GM12878 (cell line): ENCODE measurements at regions of chr15 and their contacts with region 1.

Region 1: GRCh38 chr15:90886041-90886614 is 1.8 kb downstream of the FES start:
- DNase-seq: no peak
- ATAC-seq: peak; percentile 83
- H3K4me3 ChIP-seq: no peak overlapping the region; the same call in 1 of the 2 replicates
- H3K27ac ChIP-seq: peak overlapping the region; percentile 2; the same call in 1 of the 2 replicates
- H3K4me1 ChIP-seq: peaks cover 19% of the 10 kb centered on the region
- H3K27me3 ChIP-seq: no peaks in the 10 kb centered on the region
- CTCF ChIP-seq: peak; percentile 96 to 98 (median 97)
- EP300 ChIP-seq: no peak
- POLR2A ChIP-seq: no peak
- RAD21 ChIP-seq: peak; percentile 99

Region 2: DNA sequence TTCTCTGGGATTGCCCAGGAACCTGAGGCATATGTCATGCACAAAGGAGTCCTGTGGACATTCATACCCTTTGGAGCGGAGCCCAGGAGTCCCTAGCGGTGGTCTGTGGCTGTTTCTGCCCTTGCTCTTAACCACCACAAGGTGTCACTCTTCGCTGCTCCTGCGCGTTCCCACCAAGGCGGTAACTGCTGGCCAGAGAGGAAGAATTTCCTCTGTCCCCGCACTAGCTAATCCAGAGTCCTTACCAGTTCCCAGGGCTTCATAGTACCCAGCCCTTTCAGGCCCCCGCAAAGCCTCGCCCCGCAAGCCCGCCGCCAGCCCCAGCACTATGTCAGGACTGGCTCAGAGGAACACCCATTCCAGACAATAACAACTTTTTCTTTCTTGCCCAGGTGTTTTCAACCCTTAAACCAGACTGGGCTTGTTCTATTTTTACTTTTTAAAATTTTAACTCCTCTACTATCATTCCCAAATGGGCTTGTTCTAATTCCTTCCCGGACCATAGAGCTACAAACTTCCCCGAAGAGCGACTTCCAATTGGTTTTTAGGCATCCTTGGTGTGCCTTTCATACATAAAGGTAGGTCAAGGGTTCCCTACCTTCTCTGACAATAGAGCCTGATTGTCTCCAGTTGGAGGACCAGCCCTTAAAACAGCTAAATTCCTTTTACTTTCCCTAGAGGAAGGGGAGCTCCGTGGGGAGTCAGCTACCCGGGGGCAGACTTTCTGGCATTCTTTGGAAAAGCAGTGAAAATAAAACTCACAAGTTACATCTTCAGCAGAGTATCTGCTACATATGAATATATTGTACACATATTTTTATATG is 565.9 kb before region 1 on chr15:
- CTCF ChIA-PET with region 1: interaction called, 25 read pairs
- POLR2A ChIA-PET with region 1: no interaction called
- RAD21 ChIA-PET with region 1: interaction called, 18 read pairs
- SMC1A ChIA-PET with region 1: interaction called, 30 read pairs
- in situ Hi-C with region 1: loop called (anchors 5 kb)
- intact Hi-C with region 1: loop called (anchors 1 kb)
- DNase-seq: peak; percentile 45
- ATAC-seq: peak; percentile 100
- H3K4me3 ChIP-seq: no peak overlapping the region
- H3K27ac ChIP-seq: no peak overlapping the region
- H3K4me1 ChIP-seq: no peaks in the 10 kb centered on the region
- H3K27me3 ChIP-seq: no peaks in the 10 kb centered on the region
- CTCF ChIP-seq: peak; percentile 98 to 99 (median 98); a peak in 5 of 6 replicates
- EP300 ChIP-seq: no peak
- POLR2A ChIP-seq: no peak
- RAD21 ChIP-seq: peak; percentile 93

Region 3: DNA sequence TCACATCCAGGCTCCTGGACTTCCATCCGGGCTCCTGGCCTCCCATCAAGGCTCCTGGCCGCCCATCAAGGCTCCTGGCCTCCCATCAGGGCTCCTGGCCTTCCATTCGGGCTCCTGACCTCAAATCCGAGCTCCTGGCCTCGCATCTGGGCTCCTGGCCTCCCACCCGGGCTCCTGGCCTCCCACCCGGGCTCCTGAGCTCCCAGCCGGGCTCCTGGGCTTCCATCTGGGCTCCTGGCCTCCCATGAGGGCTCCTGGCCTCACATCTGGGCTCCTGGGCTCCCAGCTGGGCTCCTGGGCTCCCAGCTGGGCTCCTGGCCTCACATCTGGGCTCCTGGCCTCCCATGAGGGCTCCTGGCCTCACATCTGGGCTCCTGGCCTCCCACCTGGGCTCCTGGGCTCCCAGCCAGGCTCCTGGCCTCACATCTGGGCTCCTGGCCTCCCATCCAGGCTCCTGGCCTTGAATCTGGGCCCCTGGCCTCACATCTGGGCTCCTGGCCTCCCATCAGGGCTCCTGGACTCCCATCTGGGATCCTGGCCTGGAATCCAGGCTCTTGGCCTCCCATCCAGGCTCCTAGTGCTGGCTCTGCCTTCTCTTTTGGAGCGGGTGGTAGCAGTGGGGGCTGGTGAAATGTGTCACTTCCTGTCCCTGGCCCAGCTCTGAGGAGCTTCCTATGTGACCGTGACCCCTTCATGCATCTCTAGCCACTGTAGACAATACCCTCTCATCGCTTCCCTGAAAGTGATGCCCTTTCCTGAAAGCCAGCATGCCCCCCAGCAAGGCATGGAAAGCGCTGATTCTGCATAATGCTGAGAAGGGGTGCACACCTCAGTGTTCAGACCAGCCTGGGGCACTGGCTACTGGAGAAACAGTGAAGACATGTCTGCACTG is 231.6 kb before region 1 on chr15:
- CTCF ChIA-PET with region 1: interaction called, 69 read pairs
- POLR2A ChIA-PET with region 1: interaction called, 3 read pairs
- RAD21 ChIA-PET with region 1: interaction called, 12 read pairs
- SMC1A ChIA-PET with region 1: interaction called, 49 read pairs
- in situ Hi-C with region 1: loop called (anchors 5 kb)
- intact Hi-C with region 1: loop called (anchors 5 kb)
- DNase-seq: no peak
- ATAC-seq: no peak
- H3K4me3 ChIP-seq: no peak overlapping the region
- H3K27ac ChIP-seq: peak overlapping the region; percentile 7
- H3K4me1 ChIP-seq: peaks cover 45% of the 10 kb centered on the region
- H3K27me3 ChIP-seq: no peaks in the 10 kb centered on the region
- CTCF ChIP-seq: no peak
- EP300 ChIP-seq: no peak
- POLR2A ChIP-seq: no peak
- RAD21 ChIP-seq: no peak

Region 4: DNA sequence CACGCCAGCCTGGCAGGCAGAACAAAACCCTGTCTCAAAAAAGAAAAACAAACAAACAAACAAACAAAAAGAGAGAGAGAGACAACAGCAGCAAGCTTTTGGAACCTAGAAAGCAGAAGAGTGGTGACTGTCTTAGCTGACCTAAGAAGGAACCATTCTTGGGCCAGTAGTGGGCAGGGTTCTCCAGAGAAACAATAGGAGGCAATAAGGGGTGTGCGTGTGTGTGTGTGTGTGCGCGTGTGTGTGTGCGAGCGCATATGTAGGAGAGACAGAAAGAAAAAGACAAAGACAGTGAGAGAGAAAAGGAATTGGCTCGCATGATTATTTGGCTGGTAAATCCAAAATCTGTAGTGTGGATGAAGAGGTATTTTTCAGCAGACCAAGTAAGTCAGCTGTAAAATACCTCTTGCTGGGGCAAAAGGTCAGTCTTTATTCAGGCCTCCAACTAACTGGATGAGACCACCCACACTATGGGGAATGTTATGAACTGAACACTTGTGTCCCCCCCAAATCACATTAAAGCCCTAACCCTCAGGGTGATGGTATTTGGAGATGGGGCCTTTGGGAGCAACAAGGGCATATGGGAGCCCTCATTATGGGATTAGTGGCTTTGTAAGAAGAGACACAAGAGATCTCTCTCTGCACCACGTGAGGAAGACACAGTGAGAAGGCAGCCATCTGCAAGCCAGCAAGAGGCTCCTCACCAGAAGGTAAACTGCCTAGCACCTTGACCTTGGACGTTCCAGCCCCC is 184.1 kb before region 1 on chr15:
- CTCF ChIA-PET with region 1: interaction called, 45 read pairs
- POLR2A ChIA-PET with region 1: no interaction called
- RAD21 ChIA-PET with region 1: interaction called, 23 read pairs
- SMC1A ChIA-PET with region 1: interaction called, 15 read pairs
- in situ Hi-C with region 1: no loop called
- intact Hi-C with region 1: loop called (anchors 1 kb)
- DNase-seq: no peak
- ATAC-seq: no peak
- H3K4me3 ChIP-seq: no peak overlapping the region
- H3K27ac ChIP-seq: no peak overlapping the region
- H3K4me1 ChIP-seq: peaks cover 4% of the 10 kb centered on the region
- H3K27me3 ChIP-seq: no peaks in the 10 kb centered on the region
- CTCF ChIP-seq: no peak
- EP300 ChIP-seq: no peak
- POLR2A ChIP-seq: no peak
- RAD21 ChIP-seq: peak; percentile 15; the same call in 1 of the 2 replicates

Region 5: GRCh38 chr15:90780916-90781315 is 105.2 kb before region 1 on chr15:
- CTCF ChIA-PET with region 1: interaction called, 15 read pairs
- POLR2A ChIA-PET with region 1: no interaction called
- RAD21 ChIA-PET with region 1: no interaction called
- SMC1A ChIA-PET with region 1: no interaction called
- in situ Hi-C with region 1: no loop called
- intact Hi-C with region 1: no loop called
- DNase-seq: peak; percentile 5
- ATAC-seq: no peak; the same call in 2 of the 3 replicates
- H3K4me3 ChIP-seq: no peak overlapping the region
- H3K27ac ChIP-seq: no peak overlapping the region
- H3K4me1 ChIP-seq: peaks cover 5% of the 10 kb centered on the region
- H3K27me3 ChIP-seq: no peaks in the 10 kb centered on the region
- CTCF ChIP-seq: no peak
- EP300 ChIP-seq: no peak
- POLR2A ChIP-seq: no peak
- RAD21 ChIP-seq: no peak

Region 6: GRCh38 chr15:90823565-90823964 is 62.6 kb before region 1 on chr15:
- CTCF ChIA-PET with region 1: interaction called, 15 read pairs
- POLR2A ChIA-PET with region 1: no interaction called
- RAD21 ChIA-PET with region 1: interaction called, 12 read pairs
- SMC1A ChIA-PET with region 1: interaction called, 15 read pairs
- in situ Hi-C with region 1: no loop called
- intact Hi-C with region 1: loop called (anchors 5 kb)
- DNase-seq: no peak
- ATAC-seq: peak; percentile 34
- H3K4me3 ChIP-seq: no peak overlapping the region
- H3K27ac ChIP-seq: no peak overlapping the region
- H3K4me1 ChIP-seq: peaks cover 4% of the 10 kb centered on the region
- H3K27me3 ChIP-seq: no peaks in the 10 kb centered on the region
- CTCF ChIP-seq: no peak
- EP300 ChIP-seq: no peak
- POLR2A ChIP-seq: no peak
- RAD21 ChIP-seq: no peak

Region 7: GRCh38 chr15:90869601-90870353 is 16.4 kb before region 1 on chr15:
- CTCF ChIA-PET with region 1: interaction called, 16 read pairs
- POLR2A ChIA-PET with region 1: no interaction called
- RAD21 ChIA-PET with region 1: interaction called, 11 read pairs
- SMC1A ChIA-PET with region 1: interaction called, 10 read pairs
- in situ Hi-C with region 1: no loop called
- intact Hi-C with region 1: no loop called
- DNase-seq: no peak
- ATAC-seq: peak; percentile 20
- H3K4me3 ChIP-seq: peak overlapping the region; percentile 94; the same call in 1 of the 2 replicates
- H3K27ac ChIP-seq: no peak overlapping the region
- H3K4me1 ChIP-seq: peaks cover 28% of the 10 kb centered on the region
- H3K27me3 ChIP-seq: no peaks in the 10 kb centered on the region
- CTCF ChIP-seq: no peak
- EP300 ChIP-seq: no peak
- POLR2A ChIP-seq: no peak
- RAD21 ChIP-seq: no peak

Region 8: DNA sequence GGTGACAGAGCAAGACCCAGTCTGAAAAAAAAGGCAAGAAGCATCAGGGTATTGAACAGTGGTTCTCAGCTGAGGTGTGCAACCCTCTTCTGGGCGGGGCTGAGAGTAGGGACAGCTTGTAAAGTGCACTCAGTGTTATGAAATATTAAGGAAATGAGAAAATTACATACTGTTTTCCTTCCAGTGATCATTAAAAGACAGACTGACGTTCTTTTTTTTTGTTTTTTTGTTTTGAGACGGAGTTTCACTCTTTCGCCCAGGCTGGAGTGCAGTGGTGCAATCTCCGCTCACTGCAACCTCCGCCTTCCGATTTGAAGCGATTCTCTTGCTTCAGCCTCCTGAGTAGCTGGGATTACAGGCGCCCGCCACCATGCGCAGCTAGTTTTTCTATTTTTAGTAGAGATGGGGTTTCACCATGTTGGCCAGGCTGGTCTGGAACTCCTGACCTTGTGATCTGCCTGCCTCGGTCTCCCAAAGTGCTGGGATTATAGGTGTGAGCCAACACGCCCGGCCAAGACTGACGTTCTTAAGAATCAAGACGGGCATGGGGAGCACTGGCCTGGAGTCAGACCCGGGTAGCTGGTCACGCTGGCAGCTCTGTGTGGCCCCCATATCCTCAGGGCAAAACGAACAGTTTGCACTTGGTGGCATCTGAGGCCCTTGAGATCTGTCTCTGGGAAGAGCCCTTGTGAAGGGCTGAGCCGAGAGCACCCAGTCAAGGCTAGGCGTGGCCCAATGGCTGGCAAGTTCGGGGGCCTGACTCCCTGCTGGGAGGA is 28.4 kb after region 1 on chr15:
- CTCF ChIA-PET with region 1: no interaction called
- POLR2A ChIA-PET with region 1: no interaction called
- RAD21 ChIA-PET with region 1: no interaction called
- SMC1A ChIA-PET with region 1: no interaction called
- in situ Hi-C with region 1: no loop called
- intact Hi-C with region 1: no loop called
- DNase-seq: no peak
- ATAC-seq: no peak
- H3K4me3 ChIP-seq: no peak overlapping the region
- H3K27ac ChIP-seq: no peak overlapping the region
- H3K4me1 ChIP-seq: no peaks in the 10 kb centered on the region
- H3K27me3 ChIP-seq: no peaks in the 10 kb centered on the region
- CTCF ChIP-seq: no peak
- EP300 ChIP-seq: no peak
- POLR2A ChIP-seq: no peak
- RAD21 ChIP-seq: no peak